ENCODE measurements at regions of chrX and their contacts with region 1.

Region 1: GRCh38 chrX:118603981-118604380 is 108.4 kb downstream of the DOCK11 start:
- DNase-seq: peak; percentile 43
- H3K4me3 ChIP-seq: no peak overlapping the region
- H3K27ac ChIP-seq: no peak overlapping the region
- H3K4me1 ChIP-seq: peaks cover 4% of the 10 kb centered on the region
- CTCF ChIP-seq: peak; percentile 81

Region 2: DNA sequence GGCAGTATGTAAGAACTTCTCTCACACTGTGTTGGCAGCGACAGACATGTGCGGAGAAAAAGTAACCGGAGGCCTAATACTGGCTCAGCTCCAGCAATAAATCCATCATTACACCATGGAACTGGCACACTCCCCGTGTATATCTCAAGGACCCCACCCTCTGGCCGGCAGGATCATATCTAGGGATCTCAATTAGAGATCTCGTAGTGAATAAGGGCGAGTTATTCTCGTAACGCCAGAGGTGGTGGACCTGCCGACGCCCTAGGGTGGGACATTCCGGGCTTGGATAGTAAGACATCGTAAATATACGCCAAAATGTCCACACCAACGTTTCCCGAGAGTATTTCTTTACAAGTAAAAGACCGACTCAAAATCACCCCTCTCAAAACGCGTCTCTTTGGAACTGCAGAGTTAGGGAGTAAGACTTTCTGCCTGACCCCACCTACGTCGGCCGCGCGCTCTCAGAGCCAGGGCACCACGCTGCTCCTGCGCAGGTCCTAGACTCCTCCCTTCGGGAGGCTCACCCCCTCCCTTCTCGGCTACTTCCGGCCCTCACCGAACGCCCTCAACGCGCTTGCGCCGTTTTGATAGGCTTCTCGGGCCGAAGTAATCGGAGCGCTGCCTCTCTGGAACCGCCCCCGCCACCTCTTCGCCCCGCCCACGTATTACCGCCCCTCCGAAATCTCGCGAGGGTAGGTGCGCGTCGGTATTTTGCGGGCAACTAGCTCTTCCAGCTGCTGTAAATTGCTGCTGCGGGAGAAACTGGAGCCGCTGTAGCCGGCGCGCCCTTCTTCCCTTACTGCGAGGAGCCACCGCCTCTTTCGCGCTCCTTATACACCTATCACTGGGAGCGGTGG is 258.4 kb before region 1 on chrX and contains the start of gene WDR44:
- CTCF ChIA-PET with region 1: no interaction called
- POLR2A ChIA-PET with region 1: no interaction called
- intact Hi-C with region 1: loop called (anchors 10 kb)
- DNase-seq: peak; percentile 94
- H3K4me3 ChIP-seq: peak within 1 kb of the TSS; percentile 93
- H3K27ac ChIP-seq: peak within 1 kb of the TSS; percentile 79
- H3K4me1 ChIP-seq: peaks cover 26% of the 10 kb centered on the region
- CTCF ChIP-seq: no peak
- total RNA-seq, gene WDR44: 9.3 and 9.4 TPM in 2 replicates

Region 3: GRCh38 chrX:118459494-118459893 is 144.5 kb before region 1 on chrX:
- CTCF ChIA-PET with region 1: interaction called, 3 read pairs
- POLR2A ChIA-PET with region 1: no interaction called
- intact Hi-C with region 1: loop called (anchors 1 kb)
- DNase-seq: peak; percentile 45
- H3K4me3 ChIP-seq: no peak overlapping the region
- H3K27ac ChIP-seq: no peak overlapping the region
- H3K4me1 ChIP-seq: no peaks in the 10 kb centered on the region
- CTCF ChIP-seq: peak; percentile 78

Region 4: DNA sequence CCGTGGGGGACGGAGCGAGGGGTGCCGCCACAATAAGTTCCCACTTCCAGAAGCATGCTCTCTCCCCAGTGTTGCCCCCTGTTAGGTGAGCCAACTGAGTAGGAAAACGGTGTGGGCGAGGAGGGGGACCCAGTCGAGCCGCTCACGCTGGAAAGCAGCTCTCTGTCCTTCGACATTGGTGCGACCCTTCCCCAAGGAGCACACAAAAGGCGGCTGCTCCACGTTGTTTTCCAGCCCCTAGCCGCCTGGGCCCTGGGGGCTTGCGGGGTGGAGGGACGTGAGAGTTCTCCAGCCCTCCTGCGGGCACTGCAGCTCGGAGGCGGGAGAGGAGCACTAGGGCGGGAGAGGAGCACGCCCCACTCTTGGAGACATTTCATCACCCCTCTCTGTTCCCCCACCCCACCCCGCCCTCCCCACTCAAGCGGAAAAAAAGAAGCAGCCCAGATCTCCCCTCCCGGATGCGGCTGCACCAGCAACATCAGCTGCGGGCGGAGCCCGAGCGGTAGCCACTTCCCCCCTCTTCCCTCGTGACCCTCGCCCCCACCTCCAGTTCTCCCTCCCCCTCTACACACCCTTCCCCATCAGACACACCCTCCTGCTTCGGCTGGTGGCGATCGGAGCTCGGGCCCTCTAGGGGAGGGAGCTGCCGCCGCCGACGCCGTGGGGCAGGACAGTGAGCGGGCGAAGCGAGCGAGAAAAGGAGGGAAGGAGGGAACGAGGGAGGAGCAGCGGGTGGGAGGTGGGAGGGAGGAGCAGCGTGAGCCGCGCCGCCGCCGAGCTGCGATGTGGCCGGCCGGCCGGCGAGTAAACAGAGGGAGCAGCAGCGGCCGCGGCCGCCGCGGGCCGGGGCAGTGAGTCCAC is 108.7 kb before region 1 on chrX and contains the start of gene DOCK11:
- CTCF ChIA-PET with region 1: interaction called, 4 read pairs
- POLR2A ChIA-PET with region 1: interaction called, 5 read pairs
- intact Hi-C with region 1: loop called (anchors 5 kb)
- DNase-seq: peak; percentile 90
- H3K4me3 ChIP-seq: peak within 1 kb of the TSS; percentile 91
- H3K27ac ChIP-seq: peak within 1 kb of the TSS; percentile 78
- H3K4me1 ChIP-seq: peaks cover 21% of the 10 kb centered on the region
- CTCF ChIP-seq: no peak
- total RNA-seq, gene DOCK11: 24.9 and 27.0 TPM in 2 replicates

Region 5: GRCh38 chrX:118528071-118528737 is 75.8 kb before region 1 on chrX:
- CTCF ChIA-PET with region 1: no interaction called
- POLR2A ChIA-PET with region 1: no interaction called
- intact Hi-C with region 1: no loop called
- DNase-seq: peak; percentile 31
- H3K4me3 ChIP-seq: peak overlapping the region; percentile 65
- H3K27ac ChIP-seq: peak overlapping the region; percentile 59
- H3K4me1 ChIP-seq: peaks cover 20% of the 10 kb centered on the region
- CTCF ChIP-seq: no peak

Region 6: DNA sequence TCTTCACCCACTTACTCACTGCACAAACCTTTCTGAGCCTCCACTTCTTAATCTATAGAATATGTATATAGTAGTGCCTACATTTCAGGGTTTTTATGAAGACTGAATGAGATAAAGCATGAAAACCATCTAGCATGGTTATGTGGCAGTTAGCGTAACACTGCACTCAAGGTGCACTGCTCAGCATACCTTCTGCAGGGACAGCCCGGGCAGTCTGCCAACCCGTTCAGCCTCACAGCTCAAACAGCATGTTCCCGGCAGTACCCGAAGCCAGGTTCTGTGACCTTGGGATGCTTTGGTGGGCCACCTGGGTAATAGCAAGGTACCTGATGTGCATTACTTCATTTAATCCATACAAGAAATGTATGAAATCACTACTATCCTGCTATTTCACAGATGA is 26.9 kb before region 1 on chrX:
- CTCF ChIA-PET with region 1: no interaction called
- POLR2A ChIA-PET with region 1: no interaction called
- intact Hi-C with region 1: no loop called
- DNase-seq: no peak
- H3K4me3 ChIP-seq: no peak overlapping the region
- H3K27ac ChIP-seq: no peak overlapping the region
- H3K4me1 ChIP-seq: no peaks in the 10 kb centered on the region
- CTCF ChIP-seq: no peak